ENCODE measurements at regions of chr15 and their contacts with region 1.

Region 1: GRCh38 chr15:55108858-55109518 is 87.8 kb downstream of the RSL24D1 start:
- DNase-seq: peak; percentile 78
- ATAC-seq: peak; percentile 36
- H3K4me3 Mint-ChIP-seq: no peak overlapping the region
- H3K27ac Mint-ChIP-seq: no peak overlapping the region
- H3K4me1 Mint-ChIP-seq: no peaks in the 10 kb centered on the region
- H3K27me3 Mint-ChIP-seq: no peaks in the 10 kb centered on the region

Region 2: GRCh38 chr15:53962332-53963241 is 1146.4 kb before region 1 on chr15:
- CTCF ChIA-PET with region 1: interaction called, 3 read pairs
- POLR2A ChIA-PET with region 1: no interaction called
- intact Hi-C with region 1: loop called in 1 of 2 experiments (anchors 5 kb)
- DNase-seq: peak; percentile 59
- ATAC-seq: no peak
- H3K4me3 Mint-ChIP-seq: no peak overlapping the region
- H3K27ac Mint-ChIP-seq: no peak overlapping the region
- H3K4me1 Mint-ChIP-seq: no peaks in the 10 kb centered on the region
- H3K27me3 Mint-ChIP-seq: peaks cover 6% of the 10 kb centered on the region

Region 3: DNA sequence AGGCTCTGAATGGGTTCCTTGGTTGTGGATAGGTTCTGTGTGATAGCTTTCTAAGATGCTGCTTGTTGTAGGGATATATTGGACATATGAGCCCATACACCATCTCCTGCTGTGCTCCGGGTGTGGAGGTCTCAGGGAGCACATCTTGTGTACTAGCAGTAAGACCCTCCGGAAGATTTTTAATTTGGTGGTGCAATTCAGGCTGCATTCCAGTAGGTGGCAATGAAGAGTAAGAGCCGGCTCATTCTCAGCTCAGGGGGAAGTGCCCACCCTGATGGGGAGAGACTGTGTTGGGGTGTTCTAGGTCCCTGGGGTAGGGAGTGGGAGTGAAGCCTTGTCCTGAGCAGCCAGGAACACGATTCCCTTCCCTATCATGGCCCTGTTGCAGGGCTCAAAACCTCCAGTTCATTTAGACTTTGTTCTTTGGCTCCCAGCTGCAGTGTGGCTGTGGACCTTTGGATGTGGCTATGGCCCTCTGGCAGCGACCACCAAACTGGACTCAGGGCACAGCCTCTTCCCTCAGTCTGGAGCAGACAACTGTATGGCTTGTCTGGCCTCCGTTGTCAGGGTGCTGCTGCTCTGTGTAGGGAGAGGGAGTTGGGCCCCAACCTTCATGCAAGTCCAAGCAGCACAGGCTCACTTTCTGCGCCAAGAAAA is 1026.0 kb before region 1 on chr15:
- CTCF ChIA-PET with region 1: interaction called, 4 read pairs
- POLR2A ChIA-PET with region 1: no interaction called
- intact Hi-C with region 1: loop called in 1 of 2 experiments (anchors 2 kb)
- DNase-seq: peak; percentile 20
- ATAC-seq: no peak
- H3K4me3 Mint-ChIP-seq: no peak overlapping the region
- H3K27ac Mint-ChIP-seq: no peak overlapping the region
- H3K4me1 Mint-ChIP-seq: no peaks in the 10 kb centered on the region
- H3K27me3 Mint-ChIP-seq: peaks cover 6% of the 10 kb centered on the region

Region 4: DNA sequence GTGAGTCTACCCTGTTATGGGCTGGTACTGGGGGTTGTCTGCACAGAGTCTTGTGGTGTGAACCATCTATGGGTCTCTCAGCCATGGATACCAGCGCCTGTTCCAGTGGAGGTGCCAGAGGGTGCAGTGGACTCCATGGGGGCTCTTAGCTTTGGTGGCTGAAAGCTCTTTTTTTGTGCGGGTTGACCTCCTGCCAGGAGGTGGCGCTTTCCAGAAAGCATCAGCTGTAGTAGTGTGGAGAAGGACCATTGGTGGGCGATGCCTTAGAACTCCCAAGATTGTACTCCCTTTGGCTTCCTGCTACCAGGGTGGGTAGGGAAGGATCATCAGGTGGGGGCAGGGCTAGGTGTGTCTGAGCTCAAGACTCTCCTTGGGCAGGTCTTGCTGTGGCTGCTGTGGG is 514.9 kb before region 1 on chr15:
- CTCF ChIA-PET with region 1: no interaction called
- POLR2A ChIA-PET with region 1: no interaction called
- intact Hi-C with region 1: loop called in 1 of 2 experiments (anchors 10 kb)
- DNase-seq: peak; percentile 13
- ATAC-seq: no peak
- H3K4me3 Mint-ChIP-seq: no peak overlapping the region
- H3K27ac Mint-ChIP-seq: no peak overlapping the region
- H3K4me1 Mint-ChIP-seq: no peaks in the 10 kb centered on the region
- H3K27me3 Mint-ChIP-seq: peaks cover 2% of the 10 kb centered on the region

Region 5: DNA sequence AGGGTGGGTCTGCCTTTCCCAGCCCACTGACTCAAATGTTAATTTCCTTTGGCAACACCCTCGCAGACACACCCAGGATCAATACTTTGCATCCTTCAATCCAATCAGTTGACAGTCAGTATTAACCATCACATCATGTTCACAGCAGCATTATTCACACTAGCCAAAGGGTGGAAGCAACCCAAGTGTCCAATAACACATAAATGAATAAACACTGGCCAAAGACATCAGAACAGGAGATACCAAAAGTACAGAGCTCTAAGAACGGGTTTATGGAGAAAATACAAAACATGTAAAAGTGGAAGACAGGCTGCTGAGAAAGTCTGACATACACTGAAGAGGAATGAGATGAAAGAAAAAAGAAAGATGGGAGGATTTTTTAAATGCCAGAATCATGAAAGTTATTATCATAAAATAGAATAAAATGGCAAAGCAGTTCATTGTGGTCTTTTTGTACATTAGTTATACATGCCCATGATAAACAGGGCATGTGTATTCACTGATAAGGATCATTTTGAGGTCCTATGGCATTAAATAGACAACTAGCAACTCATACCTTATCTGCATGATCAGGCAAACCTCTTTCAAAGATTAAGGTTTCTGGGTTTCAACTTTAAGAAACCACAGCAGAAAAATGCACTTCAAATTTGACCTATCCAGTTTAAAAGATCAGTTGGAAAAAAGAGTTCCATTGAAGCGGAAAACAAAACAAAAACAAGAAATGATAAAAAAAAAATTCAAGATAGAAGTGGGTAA is 376.1 kb after region 1 on chr15:
- CTCF ChIA-PET with region 1: no interaction called
- POLR2A ChIA-PET with region 1: no interaction called
- intact Hi-C with region 1: no loop called
- DNase-seq: no peak
- ATAC-seq: no peak
- H3K4me3 Mint-ChIP-seq: no peak overlapping the region
- H3K27ac Mint-ChIP-seq: no peak overlapping the region
- H3K4me1 Mint-ChIP-seq: no peaks in the 10 kb centered on the region
- H3K27me3 Mint-ChIP-seq: no peaks in the 10 kb centered on the region

Measured in activated CD4-positive, alpha-beta T cell treated with anti-CD3 and anti-CD28 coated beads for 36 hours (primary cell).